ENCODE measurements at regions of chr19 and their contacts with region 1.

Region 1: GRCh38 chr19:42176990-42177685 is 40.3 kb downstream of the DEDD2 start:
- DNase-seq: peak; percentile 85
- ATAC-seq: peak; percentile 93
- H3K4me3 ChIP-seq: peak overlapping the region; percentile 3 to 83 (median 48)
- H3K4me3 Mint-ChIP-seq: no peak overlapping the region
- H3K27ac ChIP-seq: no peak overlapping the region
- H3K27ac Mint-ChIP-seq: no peak overlapping the region
- H3K4me1 ChIP-seq: peaks cover 26 to 49% of the 10 kb centered on the region in 2 donors
- H3K4me1 Mint-ChIP-seq: peaks cover 15% of the 10 kb centered on the region
- H3K27me3 ChIP-seq: peaks cover 0 to 49% (median 39%) of the 10 kb centered on the region in 4 experiments
- H3K27me3 Mint-ChIP-seq: peaks cover 20% of the 10 kb centered on the region
- CTCF ChIP-seq: peak; percentile 48

Region 2: DNA sequence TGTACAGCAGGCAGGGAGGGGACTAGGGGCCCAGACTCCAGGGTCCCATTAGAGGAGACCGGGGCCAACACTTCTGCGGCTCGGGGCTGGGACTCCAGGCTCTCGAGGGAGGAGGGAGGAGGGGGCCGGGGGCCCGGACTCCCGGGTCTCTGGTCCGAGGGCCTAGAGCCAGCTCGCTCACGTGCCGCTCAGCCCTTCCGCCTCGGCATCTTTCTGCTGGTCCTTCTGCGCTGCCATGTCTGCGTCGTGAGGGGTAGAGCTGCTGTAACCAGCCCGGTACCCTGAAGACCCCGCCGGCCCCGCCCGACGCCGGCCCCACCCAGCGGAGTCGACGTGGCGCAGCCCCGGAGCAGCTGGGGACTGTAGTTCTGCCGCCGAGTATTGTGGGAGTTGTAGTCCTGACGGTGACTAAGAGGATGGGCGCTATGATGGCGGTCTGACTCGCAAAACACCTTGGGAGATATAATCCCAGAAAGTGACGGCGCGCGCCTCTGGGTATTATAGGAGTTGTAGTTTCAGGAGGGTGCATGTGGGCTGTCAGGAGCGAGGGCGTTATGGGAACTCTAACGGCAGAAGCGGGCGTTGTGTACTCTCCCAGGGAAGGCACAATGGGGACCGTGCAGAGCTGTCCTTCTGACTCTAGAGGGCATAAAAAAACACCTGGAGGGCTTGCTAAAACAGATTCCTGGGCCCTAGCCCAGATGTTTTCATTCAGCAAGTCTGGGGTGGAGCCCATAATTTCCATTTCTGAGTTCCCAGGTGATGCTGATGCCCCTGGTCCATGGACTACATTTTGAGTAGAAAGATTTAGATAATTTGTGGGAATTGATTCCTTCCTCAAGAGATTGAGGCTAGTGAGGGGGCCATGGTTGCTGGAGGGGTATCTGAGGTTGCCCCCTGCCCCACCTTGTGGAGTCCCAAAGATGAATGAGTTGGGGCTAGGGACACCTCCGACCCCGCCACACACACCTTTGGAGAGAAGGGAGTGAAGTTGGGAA is 217.8 kb before region 1 on chr19 and contains the start of gene RABAC1:
- CTCF ChIA-PET with region 1: no interaction called
- POLR2A ChIA-PET with region 1: no interaction called
- intact Hi-C with region 1: no loop called
- DNase-seq: peak; percentile 89
- ATAC-seq: peak; percentile 90
- H3K4me3 ChIP-seq: peak within 1 kb of the TSS; percentile 57 to 94 (median 81)
- H3K4me3 Mint-ChIP-seq: peak within 1 kb of the TSS; percentile 99
- H3K27ac ChIP-seq: peak within 1 kb of the TSS; percentile 78
- H3K27ac Mint-ChIP-seq: peak within 1 kb of the TSS; percentile 89
- H3K4me1 ChIP-seq: peaks cover 10 to 22% of the 10 kb centered on the region in 2 donors
- H3K4me1 Mint-ChIP-seq: peaks cover 18% of the 10 kb centered on the region
- H3K27me3 ChIP-seq: no peaks in the 10 kb centered on the region
- H3K27me3 Mint-ChIP-seq: no peaks in the 10 kb centered on the region
- CTCF ChIP-seq: peak; percentile 44
- total RNA-seq, gene RABAC1: 139 and 146 TPM in 2 replicates

Region 3: GRCh38 chr19:42113641-42114348 is 63.3 kb before region 1 on chr19:
- CTCF ChIA-PET with region 1: interaction called, 150 read pairs
- POLR2A ChIA-PET with region 1: interaction called, 4 read pairs
- intact Hi-C with region 1: no loop called
- DNase-seq: peak; percentile 84
- ATAC-seq: peak; percentile 80
- H3K4me3 ChIP-seq: peak overlapping the region in 4 of 5 experiments; percentile 16 to 49 (median 38)
- H3K4me3 Mint-ChIP-seq: peak overlapping the region; percentile 87
- H3K27ac ChIP-seq: peak overlapping the region; percentile 71 to 79
- H3K27ac Mint-ChIP-seq: peak overlapping the region; percentile 98
- H3K4me1 ChIP-seq: peaks cover 81 to 98% of the 10 kb centered on the region in 2 donors
- H3K4me1 Mint-ChIP-seq: peaks cover 91% of the 10 kb centered on the region
- H3K27me3 ChIP-seq: no peaks in the 10 kb centered on the region
- H3K27me3 Mint-ChIP-seq: no peaks in the 10 kb centered on the region
- CTCF ChIP-seq: no peak

Region 4: DNA sequence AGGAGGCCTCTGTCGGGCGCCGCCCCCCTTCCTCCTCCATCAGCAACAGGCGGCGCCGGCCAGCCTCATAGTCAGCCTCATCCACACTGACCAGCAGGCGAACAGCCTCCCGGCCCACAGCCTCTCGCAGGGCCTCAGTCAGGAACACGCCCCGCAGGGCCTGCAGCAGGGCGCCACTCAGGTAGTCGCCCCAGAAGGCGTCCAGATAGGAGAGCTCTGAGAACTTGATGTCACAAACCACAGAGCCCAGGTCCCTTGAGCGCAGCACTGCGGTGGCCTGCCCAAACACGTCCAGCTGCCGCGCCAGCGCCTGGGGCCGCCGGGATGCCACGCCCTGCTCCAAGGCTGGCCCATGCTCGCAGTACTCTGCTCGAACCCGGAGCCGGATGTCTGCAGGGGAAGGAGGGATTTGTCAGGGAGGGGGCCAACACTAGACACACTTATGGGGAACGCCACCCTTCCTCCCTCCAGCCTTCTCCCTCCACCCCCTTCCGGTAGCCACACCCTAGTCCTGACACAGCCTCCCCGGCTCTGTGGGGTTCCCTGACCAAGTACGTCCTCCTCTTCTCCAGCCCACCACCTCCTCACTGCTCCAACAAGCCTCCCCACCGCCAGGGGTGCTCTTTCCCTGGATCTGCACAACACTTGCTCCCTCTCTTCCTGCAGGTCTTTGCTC is 22.4 kb after region 1 on chr19:
- CTCF ChIA-PET with region 1: interaction called, 14 read pairs
- POLR2A ChIA-PET with region 1: interaction called, 4 read pairs
- intact Hi-C with region 1: no loop called
- DNase-seq: peak; percentile 70
- ATAC-seq: peak; percentile 37
- H3K4me3 ChIP-seq: peak overlapping the region; percentile 27 to 54 (median 44)
- H3K4me3 Mint-ChIP-seq: peak overlapping the region; percentile 77
- H3K27ac ChIP-seq: peak overlapping the region; percentile 91 to 94
- H3K27ac Mint-ChIP-seq: peak overlapping the region; percentile 92
- H3K4me1 ChIP-seq: peaks cover 70 to 84% of the 10 kb centered on the region in 2 donors
- H3K4me1 Mint-ChIP-seq: peaks cover 82% of the 10 kb centered on the region
- H3K27me3 ChIP-seq: no peaks in the 10 kb centered on the region
- H3K27me3 Mint-ChIP-seq: no peaks in the 10 kb centered on the region
- CTCF ChIP-seq: peak; percentile 32